ENCODE measurements at regions of chr6 and their contacts with region 1.

Region 1: GRCh38 chr6:30877419-30878371 is 6.6 kb upstream of the DDR1 start:
- DNase-seq: peak; percentile 89 to 90
- H3K4me3 ChIP-seq: peak overlapping the region; percentile 33 to 58 (median 43)
- H3K27ac ChIP-seq: peak overlapping the region; percentile 80 to 90
- H3K4me1 ChIP-seq: peaks cover 7 to 14% of the 10 kb centered on the region in 2 donors
- H3K27me3 ChIP-seq: no peaks in the 10 kb centered on the region
- CTCF ChIP-seq: peak; percentile 88 to 98 (median 95)
- POLR2A ChIP-seq: no peak

Region 2: DNA sequence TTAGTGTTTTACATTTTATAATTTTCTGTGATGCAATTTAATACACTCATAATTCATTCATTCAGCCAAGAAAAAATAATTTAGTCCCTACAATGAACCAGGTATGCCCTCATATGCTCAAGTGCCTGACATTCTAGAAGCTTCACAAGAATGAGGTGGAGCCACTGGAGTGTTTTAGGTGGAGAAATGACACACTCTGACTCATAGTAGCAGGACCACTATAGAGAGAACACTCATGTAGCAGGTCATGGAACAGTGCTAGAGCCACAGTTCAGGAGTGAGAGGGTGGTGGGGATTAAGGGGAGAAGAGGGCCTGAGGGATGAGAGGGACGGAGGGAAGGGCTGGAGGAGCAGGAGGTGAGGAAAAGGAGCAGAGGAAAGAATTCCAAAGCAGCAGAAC is 1051.4 kb before region 1 on chr6:
- intact Hi-C with region 1: no loop called
- DNase-seq: no peak
- H3K4me3 ChIP-seq: no peak overlapping the region
- H3K27ac ChIP-seq: no peak overlapping the region
- H3K4me1 ChIP-seq: no peaks in the 10 kb centered on the region
- H3K27me3 ChIP-seq: peaks cover 0 to 17% of the 10 kb centered on the region in 2 donors
- CTCF ChIP-seq: no peak
- POLR2A ChIP-seq: no peak

Region 3: GRCh38 chr6:30826961-30827342 is 50.7 kb before region 1 on chr6:
- intact Hi-C with region 1: loop called (anchors 2 kb)
- DNase-seq: no peak
- H3K4me3 ChIP-seq: no peak overlapping the region
- H3K27ac ChIP-seq: peak overlapping the region in 1 of 2 donors; percentile 79
- H3K4me1 ChIP-seq: peaks cover 4 to 7% of the 10 kb centered on the region in 2 donors
- H3K27me3 ChIP-seq: no peaks in the 10 kb centered on the region
- CTCF ChIP-seq: no peak
- POLR2A ChIP-seq: no peak

Region 4: GRCh38 chr6:30942338-30943060 is 64.8 kb after region 1 on chr6:
- intact Hi-C with region 1: no loop called
- DNase-seq: peak; percentile 72 to 73
- H3K4me3 ChIP-seq: no peak overlapping the region
- H3K27ac ChIP-seq: no peak overlapping the region
- H3K4me1 ChIP-seq: no peaks in the 10 kb centered on the region
- H3K27me3 ChIP-seq: no peaks in the 10 kb centered on the region
- CTCF ChIP-seq: peak in 2 of 3 donors; percentile 48 to 50
- POLR2A ChIP-seq: no peak

Measured in breast epithelium (tissue), 4 donors.